Posterior vena cava (tissue), 2 donors: ENCODE measurements at regions of chr12 and their contacts with region 1.

Region 1: DNA sequence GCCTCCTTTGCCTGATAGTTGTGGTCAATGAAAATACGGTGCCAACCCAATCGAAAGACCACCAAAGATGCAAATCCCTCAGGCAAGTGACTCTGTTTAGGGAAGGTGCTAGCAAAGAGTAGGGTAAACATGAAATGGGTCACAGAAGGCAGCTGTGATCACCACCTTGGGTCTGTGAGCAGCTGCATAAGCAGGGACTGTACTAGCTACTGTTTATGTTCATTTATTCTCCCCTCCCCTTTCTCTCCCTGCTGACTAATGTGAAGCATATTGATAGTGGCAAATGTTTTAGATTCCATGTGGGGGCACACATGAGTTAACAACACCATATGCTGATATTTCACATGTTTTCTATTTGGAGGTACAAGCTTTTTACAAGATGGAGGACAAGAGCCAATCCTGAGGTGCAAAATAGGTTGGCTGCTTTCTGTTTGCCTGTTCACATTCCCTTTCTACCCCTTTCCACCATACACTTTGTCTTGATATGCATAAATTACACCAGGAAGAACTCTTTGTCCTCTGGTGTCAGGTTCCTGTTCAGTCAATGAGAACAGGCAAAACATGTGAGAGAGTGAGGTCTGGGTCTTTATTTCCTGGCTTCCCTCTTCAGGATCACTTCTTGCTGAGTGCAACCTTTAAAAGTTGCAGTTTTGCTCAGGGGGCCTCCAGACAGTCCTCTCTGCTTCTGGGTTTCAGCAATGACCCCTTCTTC is 71.1 kb downstream of the AVPR1A start:
- DNase-seq: no peak

Region 2: GRCh38 chr12:62232143-62232729 is 847.7 kb before region 1 on chr12:
- intact Hi-C with region 1: loop called in 1 of 2 experiments (anchors 5 kb)
- DNase-seq: no peak